Heart right ventricle (tissue), 16 donors: ENCODE measurements at regions of chr5 and their contacts with region 1.

Region 1: GRCh38 chr5:173278172-173278571 is 43.2 kb upstream of the NKX2-5 start:
- DNase-seq: peak; percentile 81 to 83
- ATAC-seq: peak; percentile 86 to 95 (median 92)
- H3K4me3 ChIP-seq: no peak overlapping the region
- H3K27ac ChIP-seq: peak overlapping the region; percentile 53 to 88 (median 76)
- H3K4me1 ChIP-seq: peaks cover 0 to 40% (median 4%) of the 10 kb centered on the region in 9 donors
- H3K27me3 ChIP-seq: peaks cover 0 to 36% (median 18%) of the 10 kb centered on the region in 7 donors
- CTCF ChIP-seq: no peak

Region 2: DNA sequence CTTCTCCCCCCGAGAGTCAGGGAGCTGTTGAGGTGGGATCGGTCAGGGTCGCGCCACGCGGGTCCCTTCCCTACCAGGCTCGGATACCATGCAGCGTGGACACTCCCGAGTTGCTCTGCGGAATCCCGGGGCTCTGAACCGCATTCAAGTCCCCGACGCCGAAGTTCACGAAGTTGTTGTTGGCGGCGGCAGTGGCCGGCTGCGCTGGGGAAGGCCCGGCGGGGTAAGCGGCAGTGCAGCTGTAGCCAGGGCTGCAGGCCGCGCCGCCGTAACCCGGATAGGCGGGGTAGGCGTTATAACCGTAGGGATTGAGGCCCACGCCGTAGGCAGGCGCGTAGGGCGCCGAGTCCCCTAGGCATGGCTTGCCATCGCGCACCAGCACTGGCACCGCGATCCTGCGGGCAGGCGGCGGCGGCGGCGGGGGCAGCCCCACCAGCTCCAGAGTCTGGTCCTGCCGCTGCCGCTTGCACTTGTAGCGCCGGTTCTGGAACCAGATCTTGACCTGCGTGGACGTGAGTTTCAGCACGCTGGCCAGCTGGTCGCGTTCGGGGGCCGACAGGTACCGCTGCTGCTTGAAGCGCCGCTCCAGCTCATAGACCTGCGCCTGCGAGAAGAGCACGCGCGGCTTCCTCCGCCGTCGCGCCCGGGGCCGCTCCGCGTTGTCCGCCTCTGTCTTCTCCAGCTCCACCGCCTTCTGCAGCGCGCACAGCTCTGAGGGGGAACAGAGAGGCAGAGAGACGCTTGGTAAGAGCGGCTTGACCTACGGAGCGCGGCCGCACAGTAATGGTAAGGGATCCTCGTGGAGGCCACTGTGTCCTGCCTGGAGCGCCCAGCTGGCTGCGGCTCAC is 45.4 kb before region 1 on chr5:
- intact Hi-C with region 1: loop called in 3 of 10 experiments (anchors 1 to 5 kb)
- DNase-seq: peak in 1 of 2 donors; percentile 23
- ATAC-seq: no peak
- H3K4me3 ChIP-seq: peak overlapping the region; percentile 44 to 73 (median 62)
- H3K27ac ChIP-seq: peak overlapping the region; percentile 19 to 95 (median 88)
- H3K4me1 ChIP-seq: peaks cover 12 to 66% (median 40%) of the 10 kb centered on the region in 9 donors
- H3K27me3 ChIP-seq: peaks cover 25 to 100% (median 96%) of the 10 kb centered on the region in 7 donors
- CTCF ChIP-seq: no peak

Region 3: DNA sequence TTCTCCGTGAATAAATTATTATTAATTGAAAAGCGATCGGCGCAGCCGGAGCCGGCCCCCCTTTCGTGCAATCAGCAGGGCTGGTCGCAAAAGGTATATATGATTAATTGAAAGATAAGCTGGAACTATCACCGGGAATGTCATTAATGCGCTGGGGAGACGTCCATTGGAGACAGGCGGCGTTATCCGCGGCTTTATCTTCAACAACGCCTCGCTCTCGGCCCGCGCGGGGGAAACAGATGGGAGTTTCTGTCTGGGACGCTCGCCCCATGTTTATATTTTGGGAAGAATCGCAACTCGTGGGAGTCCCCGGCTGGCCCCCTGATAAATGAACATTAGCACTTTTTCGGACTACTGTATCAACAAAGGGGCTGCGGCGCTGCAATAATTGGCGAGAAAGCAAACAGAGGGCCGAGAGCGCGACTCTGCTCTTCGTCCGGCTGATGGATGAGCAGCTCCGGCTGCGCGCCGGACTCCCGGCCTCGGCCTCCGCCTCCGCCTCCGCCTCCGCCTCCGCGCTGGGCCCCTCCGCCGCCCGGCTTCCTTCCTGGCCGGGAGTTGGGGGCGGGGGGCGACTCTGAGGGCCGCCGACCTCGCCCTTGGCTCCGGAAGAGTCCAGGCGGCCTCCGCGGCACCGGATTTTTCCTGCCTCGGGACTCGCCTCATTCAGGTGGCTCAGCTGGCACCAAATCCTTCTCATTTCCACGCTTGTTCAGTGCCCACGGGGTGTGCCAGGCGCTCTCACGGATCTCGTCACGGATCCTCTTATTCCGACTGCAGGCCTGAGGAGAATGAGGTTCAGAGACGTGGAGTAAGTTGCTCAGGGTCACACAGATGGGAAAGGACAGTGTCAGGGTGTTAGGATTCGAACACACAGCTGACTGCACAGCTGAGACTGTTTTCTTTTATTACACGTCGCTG is 39.6 kb before region 1 on chr5:
- intact Hi-C with region 1: loop called in 7 of 10 experiments (anchors 1 to 5 kb)
- DNase-seq: no peak
- ATAC-seq: no peak
- H3K4me3 ChIP-seq: peak overlapping the region; percentile 21 to 51 (median 42)
- H3K27ac ChIP-seq: peak overlapping the region; percentile 70 to 94 (median 89)
- H3K4me1 ChIP-seq: peaks cover 0 to 58% (median 28%) of the 10 kb centered on the region in 9 donors
- H3K27me3 ChIP-seq: peaks cover 12 to 100% (median 96%) of the 10 kb centered on the region in 7 donors
- CTCF ChIP-seq: no peak